ENCODE measurements at regions of chr16 and their contacts with region 1.

Region 1: DNA sequence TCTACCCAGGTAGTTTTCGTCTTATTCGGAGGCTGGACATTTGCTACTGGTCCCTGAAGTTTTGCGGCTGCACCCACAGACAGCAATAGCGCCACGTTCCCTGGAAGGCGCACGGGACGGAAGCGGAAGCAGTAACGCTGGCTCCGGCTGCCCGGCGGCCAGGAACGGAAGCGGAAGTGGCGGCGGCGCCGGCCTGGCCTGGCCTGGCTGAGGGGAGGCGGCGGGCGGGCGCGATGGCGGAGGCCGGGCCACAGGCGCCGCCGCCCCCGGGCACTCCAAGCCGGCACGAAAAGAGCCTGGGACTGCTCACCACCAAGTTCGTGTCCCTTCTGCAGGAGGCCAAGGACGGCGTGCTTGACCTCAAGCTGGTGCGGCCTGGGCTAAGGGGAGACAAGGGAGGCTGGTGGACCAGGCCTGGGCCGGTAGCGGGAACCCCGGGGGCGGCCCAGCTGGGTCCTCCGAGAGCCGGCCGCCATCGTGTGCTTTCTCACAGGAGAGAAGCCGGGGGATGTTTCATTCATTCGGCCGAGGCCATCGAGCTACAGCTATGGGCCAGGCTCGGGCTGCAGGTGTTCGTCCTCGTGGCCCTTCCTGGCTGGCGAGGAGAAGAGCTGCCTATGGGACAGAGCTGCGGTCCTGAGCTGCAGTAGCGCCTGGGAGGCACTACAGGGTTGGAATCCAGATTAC is at the start of gene E2F4:
- DNase-seq: peak; percentile 97
- H3K4me3 Mint-ChIP-seq: peak within 1 kb of the TSS; percentile 93
- H3K27ac Mint-ChIP-seq: peak within 1 kb of the TSS; percentile 88
- H3K4me1 Mint-ChIP-seq: peaks cover 31% of the 10 kb centered on the region
- H3K27me3 Mint-ChIP-seq: no peaks in the 10 kb centered on the region
- total RNA-seq, gene E2F4: 165 and 166 TPM in 2 replicates

Region 2: DNA sequence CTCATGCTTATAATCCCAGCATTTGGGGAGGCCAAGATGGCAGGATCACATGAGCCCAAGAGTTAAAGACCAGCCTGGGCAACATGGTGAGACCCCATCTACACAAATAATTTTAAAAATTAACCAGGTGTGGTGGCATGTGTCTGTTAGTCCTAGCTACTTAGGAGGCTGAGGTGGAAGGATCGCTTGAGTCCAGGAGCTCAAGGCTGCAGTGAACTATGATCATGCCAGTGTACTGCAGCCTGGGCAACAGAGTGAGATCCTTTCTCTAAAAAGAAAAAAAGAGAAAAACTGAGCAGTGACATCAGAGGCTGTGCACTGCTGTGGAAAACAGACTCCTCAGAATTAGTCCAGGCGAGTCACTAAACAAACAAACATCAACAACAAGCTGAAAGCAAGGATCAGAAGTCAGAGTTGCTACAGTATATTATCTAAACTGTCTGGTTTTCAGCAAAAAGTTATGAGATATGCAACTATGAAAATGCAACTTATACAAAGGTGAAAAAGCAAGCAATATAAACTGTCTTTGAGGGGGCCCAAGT is 123.9 kb before region 1 on chr16:
- intact Hi-C with region 1: no loop called
- DNase-seq: no peak
- H3K4me3 Mint-ChIP-seq: no peak overlapping the region
- H3K27ac Mint-ChIP-seq: no peak overlapping the region
- H3K4me1 Mint-ChIP-seq: peaks cover 8% of the 10 kb centered on the region
- H3K27me3 Mint-ChIP-seq: no peaks in the 10 kb centered on the region

Region 3: DNA sequence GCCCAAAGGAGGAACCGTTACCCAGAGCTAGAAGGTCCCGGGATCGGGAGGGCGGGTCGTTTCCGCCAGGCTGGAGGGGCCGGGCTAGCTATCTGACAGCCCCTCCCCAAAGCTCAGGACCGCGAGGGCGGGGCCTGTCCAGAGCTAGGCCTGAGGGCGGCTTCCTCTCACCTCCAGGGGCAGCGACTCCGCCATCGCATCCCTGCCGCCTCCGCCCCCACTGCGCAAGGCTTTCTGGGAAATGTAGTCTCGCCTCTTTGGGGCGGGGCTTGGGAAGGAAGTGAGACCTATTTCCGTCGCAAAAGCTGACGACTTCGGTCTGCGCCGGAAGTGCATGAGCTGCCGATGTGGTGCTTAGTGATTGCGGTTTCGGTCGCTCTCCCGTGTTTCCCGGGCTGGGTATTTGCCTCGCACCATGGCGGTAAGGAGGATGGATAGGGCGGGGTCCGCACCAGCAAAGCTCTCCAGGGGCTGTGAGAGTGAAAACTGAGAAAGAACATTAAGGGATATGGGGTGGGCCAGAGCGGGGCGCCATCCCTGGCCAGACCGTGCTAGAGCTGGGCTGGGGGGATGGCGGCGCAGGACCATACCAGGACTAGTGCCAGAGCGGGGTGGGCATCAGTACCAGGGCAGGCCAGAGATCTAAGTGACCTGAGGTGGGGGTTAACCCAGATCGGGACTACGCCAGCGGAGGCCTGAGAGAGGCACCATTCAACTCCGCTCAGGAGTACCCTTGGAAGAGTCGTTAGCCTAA is 34.8 kb after region 1 on chr16 and contains the start of gene TMEM208:
- intact Hi-C with region 1: loop called (anchors 1 kb)
- DNase-seq: peak; percentile 100
- H3K4me3 Mint-ChIP-seq: peak within 1 kb of the TSS; percentile 98
- H3K27ac Mint-ChIP-seq: peak within 1 kb of the TSS; percentile 98
- H3K4me1 Mint-ChIP-seq: peaks cover 43% of the 10 kb centered on the region
- H3K27me3 Mint-ChIP-seq: no peaks in the 10 kb centered on the region
- total RNA-seq, gene TMEM208: 65.0 and 65.6 TPM in 2 replicates

Measured in activated CD4-positive, alpha-beta T cell treated with anti-CD3 and anti-CD28 coated beads, Interleukin-2, amount 10 ng/mL, durations not matched to agents 24 days and 14 days (primary cell).